Activated CD4-positive, alpha-beta T cell treated with anti-CD3 and anti-CD28 coated beads for 36 hours (primary cell): ENCODE measurements at regions of chr13 and their contacts with region 1.

Region 1: GRCh38 chr13:74103970-74104555 is 30.1 kb downstream of the KLF12 start:
- DNase-seq: no peak
- ATAC-seq: peak; percentile 39
- H3K4me3 Mint-ChIP-seq: no peak overlapping the region
- H3K27ac Mint-ChIP-seq: no peak overlapping the region
- H3K4me1 Mint-ChIP-seq: peaks cover 60% of the 10 kb centered on the region
- H3K27me3 Mint-ChIP-seq: no peaks in the 10 kb centered on the region

Region 2: GRCh38 chr13:74115138-74115537 is 11.1 kb after region 1 on chr13:
- CTCF ChIA-PET with region 1: interaction called, 4 read pairs
- POLR2A ChIA-PET with region 1: no interaction called
- intact Hi-C with region 1: loop called (anchors 2 kb)
- DNase-seq: no peak
- ATAC-seq: peak; percentile 62
- H3K4me3 Mint-ChIP-seq: no peak overlapping the region
- H3K27ac Mint-ChIP-seq: peak overlapping the region; percentile 39
- H3K4me1 Mint-ChIP-seq: peaks cover 66% of the 10 kb centered on the region
- H3K27me3 Mint-ChIP-seq: no peaks in the 10 kb centered on the region